Naive thymus-derived CD4-positive, alpha-beta T cell (primary cell): ENCODE measurements at regions of chr6 and their contacts with region 1.

Region 1: GRCh38 chr6:152356451-152357061 is 280.6 kb downstream of the SYNE1 start:
- DNase-seq: peak in 6 of 9 donors; percentile 24 to 46 (median 32)
- ATAC-seq: peak; percentile 63
- H3K4me3 ChIP-seq: no peak overlapping the region
- H3K4me3 Mint-ChIP-seq: no peak overlapping the region
- H3K27ac ChIP-seq: no peak overlapping the region
- H3K27ac Mint-ChIP-seq: no peak overlapping the region
- H3K4me1 ChIP-seq: no peaks in the 10 kb centered on the region
- H3K4me1 Mint-ChIP-seq: no peaks in the 10 kb centered on the region
- H3K27me3 ChIP-seq: no peaks in the 10 kb centered on the region
- H3K27me3 Mint-ChIP-seq: peaks cover 0 to 11% (median 0%) of the 10 kb centered on the region in 5 donors

Region 2: GRCh38 chr6:151675746-151676416 is 680.7 kb before region 1 on chr6:
- CTCF ChIA-PET with region 1: no interaction called
- POLR2A ChIA-PET with region 1: no interaction called
- intact Hi-C with region 1: loop called (anchors 1 to 5 kb)
- DNase-seq: peak in 8 of 9 donors; percentile 8 to 54 (median 44)
- ATAC-seq: peak; percentile 79
- H3K4me3 ChIP-seq: no peak overlapping the region
- H3K4me3 Mint-ChIP-seq: no peak overlapping the region
- H3K27ac ChIP-seq: no peak overlapping the region
- H3K27ac Mint-ChIP-seq: peak overlapping the region in 1 of 9 donors; percentile 33
- H3K4me1 ChIP-seq: no peaks in the 10 kb centered on the region
- H3K4me1 Mint-ChIP-seq: peaks cover 0 to 6% (median under 1%) of the 10 kb centered on the region in 7 donors
- H3K27me3 ChIP-seq: no peaks in the 10 kb centered on the region
- H3K27me3 Mint-ChIP-seq: peaks cover 0 to 4% (median under 1%) of the 10 kb centered on the region in 5 donors

Region 3: GRCh38 chr6:151765444-151765886 is 591.1 kb before region 1 on chr6:
- CTCF ChIA-PET with region 1: no interaction called
- POLR2A ChIA-PET with region 1: no interaction called
- intact Hi-C with region 1: loop called (anchors 1 to 5 kb)
- DNase-seq: peak in 6 of 9 donors; percentile 17 to 55 (median 36)
- ATAC-seq: peak; percentile 64
- H3K4me3 ChIP-seq: no peak overlapping the region
- H3K4me3 Mint-ChIP-seq: no peak overlapping the region
- H3K27ac ChIP-seq: no peak overlapping the region
- H3K27ac Mint-ChIP-seq: no peak overlapping the region
- H3K4me1 ChIP-seq: no peaks in the 10 kb centered on the region
- H3K4me1 Mint-ChIP-seq: peaks cover 0 to 29% (median 10%) of the 10 kb centered on the region in 7 donors
- H3K27me3 ChIP-seq: no peaks in the 10 kb centered on the region
- H3K27me3 Mint-ChIP-seq: peaks cover 0 to 34% (median 7%) of the 10 kb centered on the region in 5 donors

Region 4: GRCh38 chr6:152206072-152206818 is 150.3 kb before region 1 on chr6:
- CTCF ChIA-PET with region 1: no interaction called
- POLR2A ChIA-PET with region 1: no interaction called
- intact Hi-C with region 1: loop called in 1 of 2 experiments (anchors 2 kb)
- DNase-seq: peak in 7 of 9 donors; percentile 15 to 50 (median 39)
- ATAC-seq: peak; percentile 45
- H3K4me3 ChIP-seq: no peak overlapping the region
- H3K4me3 Mint-ChIP-seq: no peak overlapping the region
- H3K27ac ChIP-seq: no peak overlapping the region
- H3K27ac Mint-ChIP-seq: peak overlapping the region in 5 of 9 donors; percentile 3 to 72 (median 14)
- H3K4me1 ChIP-seq: no peaks in the 10 kb centered on the region
- H3K4me1 Mint-ChIP-seq: peaks cover 0 to 12% (median 7%) of the 10 kb centered on the region in 7 donors
- H3K27me3 ChIP-seq: no peaks in the 10 kb centered on the region
- H3K27me3 Mint-ChIP-seq: no peaks in the 10 kb centered on the region

Region 5: GRCh38 chr6:152232501-152233151 is 123.9 kb before region 1 on chr6:
- CTCF ChIA-PET with region 1: no interaction called
- POLR2A ChIA-PET with region 1: no interaction called
- intact Hi-C with region 1: loop called in 1 of 2 experiments (anchors 1 kb)
- DNase-seq: peak in 5 of 9 donors; percentile 1 to 31 (median 21)
- ATAC-seq: peak; percentile 58
- H3K4me3 ChIP-seq: no peak overlapping the region
- H3K4me3 Mint-ChIP-seq: peak overlapping the region; percentile 55 to 84 (median 78)
- H3K27ac ChIP-seq: no peak overlapping the region
- H3K27ac Mint-ChIP-seq: peak overlapping the region; percentile 35 to 95 (median 86)
- H3K4me1 ChIP-seq: peaks cover 2 to 14% of the 10 kb centered on the region in 2 donors
- H3K4me1 Mint-ChIP-seq: peaks cover 10 to 33% (median 30%) of the 10 kb centered on the region in 7 donors
- H3K27me3 ChIP-seq: no peaks in the 10 kb centered on the region
- H3K27me3 Mint-ChIP-seq: no peaks in the 10 kb centered on the region